Left ventricle myocardium inferior (tissue), 1 donor: ENCODE measurements at regions of chr18 and their contacts with region 1.

Region 1: DNA sequence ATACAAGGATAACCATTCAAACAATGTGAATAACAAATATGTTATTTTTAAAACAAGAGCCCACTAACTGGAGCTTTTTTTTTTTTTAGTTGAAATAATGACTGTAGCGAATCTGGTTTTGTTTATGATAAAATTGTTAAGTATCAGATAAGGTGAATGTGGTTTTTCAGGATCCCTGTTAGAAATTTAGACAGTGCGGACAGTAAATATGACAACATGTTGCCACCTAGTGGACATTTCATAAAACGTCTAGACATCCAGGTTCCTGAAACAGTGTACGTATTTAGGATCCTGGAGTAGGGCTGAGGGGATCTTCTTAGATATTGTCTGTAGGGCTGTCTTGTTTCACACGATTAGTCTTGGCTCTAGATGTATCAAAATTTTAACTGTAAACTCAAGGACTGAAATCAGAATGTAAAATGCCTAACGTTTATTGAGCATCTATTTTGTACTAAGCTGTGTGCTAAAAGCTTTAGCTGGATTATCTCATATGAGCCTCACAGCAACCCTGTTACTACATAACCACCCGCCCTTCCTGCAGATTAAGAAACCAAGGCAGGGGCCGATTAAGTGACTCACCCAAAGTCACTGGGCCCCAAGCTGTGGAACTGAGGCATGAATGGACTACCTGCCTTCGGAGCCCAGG is 23.9 kb upstream of the CCDC68 start:
- DNase-seq: no peak
- H3K4me3 ChIP-seq: no peak overlapping the region
- H3K27ac ChIP-seq: no peak overlapping the region
- H3K4me1 ChIP-seq: no peaks in the 10 kb centered on the region
- H3K27me3 ChIP-seq: no peaks in the 10 kb centered on the region
- CTCF ChIP-seq: peak; percentile 81

Region 2: DNA sequence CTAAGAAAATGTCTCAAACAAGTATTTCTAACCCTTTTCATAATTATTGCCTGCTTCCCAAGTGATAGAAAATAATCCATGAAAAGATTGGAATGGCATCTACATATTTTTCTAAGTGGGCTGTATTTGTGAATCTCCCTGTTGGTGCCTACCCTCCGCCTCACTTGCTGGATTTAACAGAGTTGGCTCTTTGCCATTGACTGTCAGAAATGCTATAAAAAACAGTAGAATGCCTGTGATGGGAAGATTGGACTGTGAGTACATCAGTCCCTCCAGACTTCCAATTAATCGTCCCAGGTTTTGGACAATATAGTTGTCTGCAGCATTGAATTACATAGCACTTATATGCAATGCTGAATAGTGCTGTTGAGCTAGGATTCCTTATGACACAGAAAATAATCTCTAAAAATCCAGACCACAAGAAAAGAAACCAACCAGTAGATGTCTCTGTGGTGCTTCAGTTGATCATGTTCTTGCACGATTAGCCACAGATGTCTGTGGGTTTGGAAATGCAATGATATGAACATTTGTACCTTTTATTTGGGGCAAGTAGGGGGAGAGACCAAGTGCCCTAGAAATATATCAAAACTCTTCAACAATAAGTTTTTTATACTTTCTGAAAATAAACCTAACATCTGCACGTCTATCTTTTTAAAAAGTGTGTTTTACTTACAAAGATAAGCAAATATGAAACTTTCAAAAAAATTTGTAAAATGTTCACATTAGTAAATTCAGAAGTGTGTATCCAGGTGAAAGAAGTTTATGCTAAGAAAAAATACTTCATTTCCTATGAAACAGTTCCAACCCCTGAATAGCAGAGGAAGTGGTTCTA is 303.6 kb before region 1 on chr18:
- intact Hi-C with region 1: loop called (anchors 10 kb)
- DNase-seq: no peak
- H3K4me3 ChIP-seq: no peak overlapping the region
- H3K27ac ChIP-seq: no peak overlapping the region
- H3K4me1 ChIP-seq: no peaks in the 10 kb centered on the region
- H3K27me3 ChIP-seq: peaks cover 5% of the 10 kb centered on the region
- CTCF ChIP-seq: peak; percentile 54

Region 3: DNA sequence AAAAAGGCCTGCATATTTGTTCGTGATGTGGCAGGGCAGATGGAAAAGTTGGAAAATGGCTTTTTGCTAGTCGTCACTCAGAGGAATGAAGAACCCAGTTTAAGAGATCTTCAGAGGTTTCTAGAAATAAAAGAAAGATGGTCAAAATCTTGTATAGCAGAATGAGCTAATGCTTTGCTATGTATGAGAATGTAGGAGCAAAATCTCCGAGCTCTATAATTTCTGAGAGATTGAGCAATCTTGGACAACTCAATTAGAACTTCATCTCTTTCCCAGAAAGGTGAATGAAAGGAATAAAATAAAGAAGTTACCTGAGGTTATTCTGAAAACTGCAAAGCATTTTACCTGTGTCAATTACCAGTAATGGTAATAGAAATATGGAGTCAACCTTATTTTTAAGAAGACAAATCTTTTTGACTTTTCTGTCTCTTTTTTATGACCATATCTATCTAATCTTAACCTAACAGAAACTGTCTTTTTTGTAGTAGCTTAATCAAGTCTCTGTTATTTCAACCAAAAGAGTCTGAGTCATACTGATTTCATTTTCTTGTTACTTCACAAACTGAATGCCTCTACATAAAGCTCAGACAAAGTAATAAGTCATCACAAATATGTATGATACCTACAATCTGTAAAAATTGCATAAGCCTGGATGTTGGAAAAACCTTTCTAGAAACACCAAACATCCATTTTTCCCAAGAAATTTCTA is 56.4 kb before region 1 on chr18:
- intact Hi-C with region 1: loop called (anchors 10 kb)
- DNase-seq: no peak
- H3K4me3 ChIP-seq: no peak overlapping the region
- H3K27ac ChIP-seq: no peak overlapping the region
- H3K4me1 ChIP-seq: no peaks in the 10 kb centered on the region
- H3K27me3 ChIP-seq: no peaks in the 10 kb centered on the region
- CTCF ChIP-seq: no peak

Region 4: GRCh38 chr18:55096261-55096951 is 113.2 kb after region 1 on chr18:
- intact Hi-C with region 1: no loop called
- DNase-seq: no peak
- H3K4me3 ChIP-seq: no peak overlapping the region
- H3K27ac ChIP-seq: peak overlapping the region; percentile 30
- H3K4me1 ChIP-seq: peaks cover 9% of the 10 kb centered on the region
- H3K27me3 ChIP-seq: no peaks in the 10 kb centered on the region
- CTCF ChIP-seq: peak; percentile 56